ENCODE measurements at regions of chr3 and their contacts with region 1.

Region 1: GRCh38 chr3:158727206-158728060 is 4.8 kb downstream of the RARRES1 start:
- DNase-seq: peak; percentile 74
- ATAC-seq: peak; percentile 62
- H3K4me3 Mint-ChIP-seq: no peak overlapping the region
- H3K27ac Mint-ChIP-seq: no peak overlapping the region
- H3K4me1 Mint-ChIP-seq: peaks cover 22% of the 10 kb centered on the region
- H3K27me3 Mint-ChIP-seq: no peaks in the 10 kb centered on the region

Region 2: DNA sequence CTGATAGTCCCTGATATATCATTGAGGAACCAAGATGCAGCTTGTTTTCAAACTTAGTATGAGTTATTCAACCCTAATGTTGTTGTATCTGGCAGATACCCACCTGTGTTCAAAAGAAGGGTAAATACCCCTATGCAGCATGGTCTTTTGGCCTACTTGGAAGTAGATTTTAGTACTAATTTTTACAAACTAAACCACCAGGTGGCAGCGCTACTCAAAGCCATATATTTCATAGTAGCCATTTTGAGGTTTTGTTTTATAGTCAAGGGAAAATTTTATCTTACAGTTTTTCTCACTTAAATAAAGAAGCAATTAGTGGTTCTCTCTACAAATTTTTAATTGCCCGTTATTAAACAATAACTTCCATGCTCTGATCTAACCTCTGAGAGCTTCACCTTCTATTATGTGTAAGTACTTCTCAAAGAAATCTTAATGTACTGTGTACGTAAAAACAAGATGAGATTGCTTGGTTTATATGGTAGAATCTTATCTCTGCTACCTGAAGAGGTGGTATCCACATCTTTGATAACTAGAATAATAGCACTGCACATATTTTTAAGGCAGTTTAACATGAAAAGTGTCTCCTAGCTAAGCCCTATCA is 187.9 kb before region 1 on chr3:
- CTCF ChIA-PET with region 1: no interaction called
- POLR2A ChIA-PET with region 1: no interaction called
- DNase-seq: peak; percentile 61
- ATAC-seq: peak; percentile 49
- H3K4me3 Mint-ChIP-seq: no peak overlapping the region
- H3K27ac Mint-ChIP-seq: no peak overlapping the region
- H3K4me1 Mint-ChIP-seq: no peaks in the 10 kb centered on the region
- H3K27me3 Mint-ChIP-seq: no peaks in the 10 kb centered on the region

Region 3: DNA sequence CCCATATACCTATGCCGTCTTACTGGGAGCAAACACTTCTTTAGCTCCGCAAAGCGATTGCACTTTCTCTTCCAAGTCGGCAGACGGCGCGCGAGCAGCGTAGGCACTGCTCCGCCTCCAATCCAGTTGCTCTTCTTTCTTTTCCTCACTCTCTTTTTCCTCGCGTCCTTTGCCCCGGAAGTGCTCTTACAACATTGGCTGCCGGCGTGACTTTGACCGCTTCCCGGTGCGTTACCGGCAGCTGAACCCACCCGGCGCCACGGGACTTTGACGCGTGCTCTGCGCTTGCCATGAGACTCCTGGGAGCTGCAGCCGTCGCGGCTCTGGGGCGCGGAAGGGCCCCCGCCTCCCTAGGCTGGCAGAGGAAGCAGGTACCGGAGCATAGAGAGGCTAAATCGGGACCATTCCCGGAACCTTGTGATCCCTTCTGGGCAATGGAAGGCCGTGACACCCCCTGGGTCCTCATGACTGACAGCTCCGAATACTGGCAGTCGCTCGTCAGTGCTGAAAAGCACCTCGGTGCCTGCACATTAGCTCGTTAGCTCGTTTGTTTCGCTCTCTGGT is 83.0 kb before region 1 on chr3 and contains the start of gene GFM1:
- CTCF ChIA-PET with region 1: interaction called, 22 read pairs
- POLR2A ChIA-PET with region 1: interaction called, 3 read pairs
- DNase-seq: peak; percentile 93
- ATAC-seq: peak; percentile 94
- H3K4me3 Mint-ChIP-seq: peak within 1 kb of the TSS; percentile 97
- H3K27ac Mint-ChIP-seq: peak within 1 kb of the TSS; percentile 93
- H3K4me1 Mint-ChIP-seq: peaks cover 29% of the 10 kb centered on the region
- H3K27me3 Mint-ChIP-seq: no peaks in the 10 kb centered on the region
- total RNA-seq, gene GFM1: 40.4 to 45.0 TPM

Region 4: GRCh38 chr3:158659454-158660237 is 67.8 kb before region 1 on chr3:
- CTCF ChIA-PET with region 1: interaction called, 29 read pairs
- POLR2A ChIA-PET with region 1: no interaction called
- DNase-seq: peak; percentile 73
- ATAC-seq: peak; percentile 67
- H3K4me3 Mint-ChIP-seq: no peak overlapping the region
- H3K27ac Mint-ChIP-seq: no peak overlapping the region
- H3K4me1 Mint-ChIP-seq: peaks cover 11% of the 10 kb centered on the region
- H3K27me3 Mint-ChIP-seq: no peaks in the 10 kb centered on the region

Region 5: DNA sequence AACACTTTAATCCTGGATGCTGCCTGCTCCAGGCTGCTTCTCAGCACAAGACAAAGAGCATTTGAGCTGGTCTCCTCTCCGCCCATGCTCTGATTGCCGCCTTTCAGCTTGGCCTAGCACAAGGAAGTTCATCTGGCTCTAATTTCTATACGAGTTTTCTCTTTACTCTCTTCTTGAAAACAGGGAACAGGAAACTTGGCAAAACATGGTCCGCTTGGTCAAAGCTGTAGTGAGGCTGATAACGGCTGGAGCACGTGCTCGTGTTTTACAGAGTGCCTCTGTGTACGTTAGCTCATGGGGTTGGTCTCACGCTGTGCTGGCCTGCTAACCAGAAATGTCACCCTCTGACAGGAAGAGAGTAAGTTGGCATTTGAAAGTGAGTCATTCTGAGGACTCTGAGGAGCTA is 14.3 kb before region 1 on chr3:
- CTCF ChIA-PET with region 1: interaction called, 24 read pairs
- POLR2A ChIA-PET with region 1: interaction called, 3 read pairs
- DNase-seq: no peak
- ATAC-seq: no peak
- H3K4me3 Mint-ChIP-seq: no peak overlapping the region
- H3K27ac Mint-ChIP-seq: no peak overlapping the region
- H3K4me1 Mint-ChIP-seq: peaks cover 7% of the 10 kb centered on the region
- H3K27me3 Mint-ChIP-seq: no peaks in the 10 kb centered on the region

Region 6: DNA sequence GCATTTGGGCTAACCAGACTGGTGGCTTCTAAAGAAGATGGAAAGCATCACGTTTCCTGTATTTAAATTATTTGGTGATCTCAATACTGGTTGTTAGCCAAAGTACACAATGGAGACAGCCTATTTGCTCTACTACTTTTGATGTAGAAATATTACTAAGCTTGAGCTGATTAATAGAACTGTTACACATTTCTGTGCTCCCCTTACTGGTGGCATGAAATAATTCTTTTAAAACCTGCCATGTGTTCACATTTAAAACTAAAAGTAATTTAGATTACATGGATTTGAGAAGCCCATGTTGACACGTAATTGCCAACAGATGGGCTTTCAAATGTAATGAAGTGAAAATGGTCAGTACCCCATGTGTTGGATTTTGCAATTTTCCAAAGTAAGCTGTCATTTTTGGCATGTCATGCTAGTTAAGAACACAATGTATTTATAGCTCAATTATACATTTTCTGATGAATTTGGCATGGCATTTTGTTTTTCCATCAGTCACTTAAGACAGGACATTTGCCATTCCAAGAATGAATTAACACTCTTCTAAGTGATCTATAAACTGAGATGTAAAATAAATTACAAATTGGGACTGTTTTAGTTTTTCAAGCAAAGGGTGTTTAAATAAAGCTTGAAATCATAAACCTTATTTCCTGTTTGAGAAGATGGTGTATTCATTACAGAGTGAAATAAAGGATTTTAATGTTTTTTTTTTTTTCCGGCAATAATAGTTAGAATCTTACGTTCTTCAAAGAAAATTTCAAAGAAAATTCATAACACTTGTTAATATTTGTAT is 15.6 kb after region 1 on chr3:
- CTCF ChIA-PET with region 1: interaction called, 23 read pairs
- POLR2A ChIA-PET with region 1: interaction called, 3 read pairs
- DNase-seq: no peak
- ATAC-seq: no peak
- H3K4me3 Mint-ChIP-seq: no peak overlapping the region
- H3K27ac Mint-ChIP-seq: no peak overlapping the region
- H3K4me1 Mint-ChIP-seq: peaks cover 15% of the 10 kb centered on the region
- H3K27me3 Mint-ChIP-seq: no peaks in the 10 kb centered on the region

Region 7: DNA sequence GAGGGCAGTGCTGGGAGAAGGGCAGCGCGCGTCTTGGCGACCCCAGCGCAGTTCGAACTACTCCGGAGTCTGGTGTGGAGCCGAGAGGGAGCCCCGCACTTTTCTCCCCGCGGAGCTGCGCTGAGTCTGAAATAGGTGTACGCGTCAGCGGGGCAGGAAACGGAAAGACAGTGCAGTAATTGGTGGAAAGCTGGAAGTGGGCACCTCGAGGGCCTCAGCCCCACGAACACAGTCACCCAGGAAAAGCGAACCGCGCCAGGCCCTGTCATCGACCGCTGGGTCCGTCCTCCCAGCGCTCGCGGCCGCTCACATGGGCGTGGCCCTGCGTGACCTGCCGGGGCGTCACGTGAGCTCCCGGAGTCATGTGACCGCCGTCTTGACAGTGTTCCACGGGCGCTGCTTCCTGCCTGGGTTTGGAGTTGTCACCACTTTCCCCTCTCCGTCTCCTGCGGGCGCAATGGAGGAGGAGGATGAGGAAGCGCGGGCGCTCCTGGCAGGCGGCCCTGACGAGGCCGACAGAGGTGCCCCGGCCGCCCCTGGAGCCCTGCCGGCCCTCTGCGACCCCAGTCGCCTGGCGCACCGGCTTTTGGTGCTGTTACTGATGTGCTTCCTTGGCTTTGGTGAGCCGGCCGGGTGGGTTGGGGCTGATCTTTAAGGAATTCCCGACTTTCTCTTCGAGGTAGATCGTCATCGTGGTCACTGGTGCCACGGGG is 74.4 kb after region 1 on chr3 and contains the start of gene MFSD1:
- CTCF ChIA-PET with region 1: interaction called, 22 read pairs
- POLR2A ChIA-PET with region 1: no interaction called
- DNase-seq: peak; percentile 92
- ATAC-seq: peak; percentile 92
- H3K4me3 Mint-ChIP-seq: peak within 1 kb of the TSS; percentile 88
- H3K27ac Mint-ChIP-seq: peak within 1 kb of the TSS; percentile 86
- H3K4me1 Mint-ChIP-seq: peaks cover 24% of the 10 kb centered on the region
- H3K27me3 Mint-ChIP-seq: peaks cover 17% of the 10 kb centered on the region
- total RNA-seq, gene MFSD1: 22.2 to 24.1 TPM